Right cardiac atrium (tissue), 5 donors: ENCODE measurements at regions of chr15 and their contacts with region 1.

Region 1: GRCh38 chr15:76190834-76191538 is 120.3 kb downstream of the ETFA start:
- DNase-seq: peak; percentile 80 to 93 (median 90)
- ATAC-seq: peak; percentile 86 to 89
- H3K4me3 ChIP-seq: no peak overlapping the region
- H3K27ac ChIP-seq: no peak overlapping the region
- H3K4me1 ChIP-seq: peaks cover under 1% of the 10 kb centered on the region
- H3K27me3 ChIP-seq: no peaks in the 10 kb centered on the region

Region 2: GRCh38 chr15:76866716-76867321 is 675.8 kb after region 1 on chr15:
- intact Hi-C with region 1: loop called in 1 of 4 experiments (anchors 10 kb)
- DNase-seq: no peak
- ATAC-seq: peak; percentile 53 to 55
- H3K4me3 ChIP-seq: no peak overlapping the region
- H3K27ac ChIP-seq: no peak overlapping the region
- H3K4me1 ChIP-seq: no peaks in the 10 kb centered on the region
- H3K27me3 ChIP-seq: no peaks in the 10 kb centered on the region